ENCODE measurements at regions of chr9 and their contacts with region 1.

Region 1: DNA sequence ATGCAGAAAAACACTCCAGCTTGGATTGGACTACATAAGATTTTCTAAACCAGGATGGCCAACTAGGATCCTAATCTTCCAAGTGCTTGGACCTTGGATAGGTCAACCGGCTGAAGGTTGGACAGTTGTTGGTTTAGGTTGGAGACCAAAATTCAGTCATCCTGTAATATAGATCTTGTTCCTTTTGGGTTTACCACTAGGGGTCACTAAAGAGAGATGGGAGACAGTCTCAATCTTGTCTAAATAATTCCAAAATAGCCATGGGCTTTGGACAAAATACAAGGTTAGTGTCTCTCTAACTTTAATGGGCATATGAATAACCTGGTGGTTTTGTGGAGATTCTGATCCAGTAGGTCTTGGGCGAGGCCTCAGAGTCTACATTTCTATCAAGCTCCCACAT is 148.7 kb upstream of the ERCC6L2 start:
- DNase-seq: peak; percentile 36 to 42
- ATAC-seq: peak; percentile 68 to 78; a peak in 4 of 6 replicates
- H3K4me3 ChIP-seq: no peak overlapping the region
- H3K27ac ChIP-seq: no peak overlapping the region
- H3K4me1 ChIP-seq: no peaks in the 10 kb centered on the region
- CTCF ChIP-seq: peak; percentile 58
- EP300 ChIP-seq: no peak
- POLR2A ChIP-seq: no peak
- RAD21 ChIP-seq: peak; percentile 54 to 57

Region 2: DNA sequence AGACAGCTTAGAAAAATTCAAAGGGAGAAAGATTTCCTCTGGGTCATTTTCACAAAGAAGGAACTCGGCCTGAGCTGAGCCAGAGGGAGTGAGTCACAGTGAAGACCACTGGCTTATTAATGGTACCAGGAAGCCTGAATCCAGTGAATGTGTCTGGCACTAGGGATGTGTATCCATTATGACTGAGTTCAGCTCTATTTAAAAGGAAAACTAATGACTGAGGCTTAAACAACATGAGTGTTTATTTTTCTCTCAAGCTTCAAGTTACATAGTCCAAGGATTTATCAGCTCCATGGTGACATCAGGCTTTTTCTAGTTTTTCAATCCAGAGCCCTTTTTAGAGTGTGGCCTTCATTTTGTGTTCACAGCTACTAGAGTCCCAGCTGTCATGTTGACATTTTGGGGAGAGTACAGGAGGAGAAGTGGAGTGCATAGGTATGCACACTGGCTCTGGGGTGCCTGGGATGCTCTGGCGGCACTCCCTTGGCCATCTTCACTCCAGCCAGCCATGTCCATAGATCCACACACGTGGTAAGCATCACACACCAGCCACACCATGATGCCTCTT is 10.8 kb before region 1 on chr9:
- CTCF ChIA-PET with region 1: interaction called, 11 read pairs
- POLR2A ChIA-PET with region 1: no interaction called
- DNase-seq: no peak
- ATAC-seq: no peak
- H3K4me3 ChIP-seq: no peak overlapping the region
- H3K27ac ChIP-seq: no peak overlapping the region
- H3K4me1 ChIP-seq: no peaks in the 10 kb centered on the region
- CTCF ChIP-seq: no peak
- EP300 ChIP-seq: no peak
- POLR2A ChIP-seq: no peak
- RAD21 ChIP-seq: no peak

Region 3: GRCh38 chr9:95815143-95815542 is 88.4 kb after region 1 on chr9:
- CTCF ChIA-PET with region 1: no interaction called
- POLR2A ChIA-PET with region 1: no interaction called
- DNase-seq: peak in 1 of 2 experiments; percentile 18
- ATAC-seq: peak in 1 of 2 experiments; percentile 40; a peak in 1 of 6 replicates
- H3K4me3 ChIP-seq: no peak overlapping the region
- H3K27ac ChIP-seq: no peak overlapping the region
- H3K4me1 ChIP-seq: peaks cover 33% of the 10 kb centered on the region
- CTCF ChIP-seq: no peak
- EP300 ChIP-seq: no peak
- POLR2A ChIP-seq: no peak
- RAD21 ChIP-seq: no peak